Caco-2 (cell line): ENCODE measurements at regions of chr4 and their contacts with region 1.

Region 1: GRCh38 chr4:30714408-30715027 is 5.7 kb upstream of the PCDH7 start:
- DNase-seq: peak; percentile 67 to 73
- H3K4me3 ChIP-seq: no peak overlapping the region
- H3K4me3 Mint-ChIP-seq: no peak overlapping the region
- H3K27ac Mint-ChIP-seq: no peak overlapping the region
- H3K4me1 ChIP-seq: peaks cover 6% of the 10 kb centered on the region; the same call in 1 of the 2 replicates
- H3K4me1 Mint-ChIP-seq: no peaks in the 10 kb centered on the region
- H3K27me3 ChIP-seq: no peaks in the 10 kb centered on the region
- H3K27me3 Mint-ChIP-seq: no peaks in the 10 kb centered on the region
- CTCF ChIP-seq: peak; percentile 77 to 80

Region 2: GRCh38 chr4:30525662-30526315 is 188.7 kb before region 1 on chr4:
- CTCF ChIA-PET with region 1: no interaction called
- POLR2A ChIA-PET with region 1: no interaction called
- intact Hi-C with region 1: no loop called
- DNase-seq: no peak
- H3K4me3 ChIP-seq: no peak overlapping the region
- H3K4me3 Mint-ChIP-seq: no peak overlapping the region
- H3K27ac Mint-ChIP-seq: no peak overlapping the region
- H3K4me1 ChIP-seq: no peaks in the 10 kb centered on the region
- H3K4me1 Mint-ChIP-seq: peaks cover 12% of the 10 kb centered on the region
- H3K27me3 ChIP-seq: no peaks in the 10 kb centered on the region
- H3K27me3 Mint-ChIP-seq: no peaks in the 10 kb centered on the region
- CTCF ChIP-seq: no peak

Region 3: GRCh38 chr4:30757357-30757756 is 42.8 kb after region 1 on chr4:
- CTCF ChIA-PET with region 1: no interaction called
- POLR2A ChIA-PET with region 1: no interaction called
- intact Hi-C with region 1: loop called (anchors 2 kb)
- DNase-seq: peak; percentile 73 to 81
- H3K4me3 ChIP-seq: no peak overlapping the region
- H3K4me3 Mint-ChIP-seq: no peak overlapping the region
- H3K27ac Mint-ChIP-seq: no peak overlapping the region
- H3K4me1 ChIP-seq: peaks cover 62% of the 10 kb centered on the region
- H3K4me1 Mint-ChIP-seq: peaks cover 7% of the 10 kb centered on the region
- H3K27me3 ChIP-seq: no peaks in the 10 kb centered on the region
- H3K27me3 Mint-ChIP-seq: no peaks in the 10 kb centered on the region
- CTCF ChIP-seq: no peak

Region 4: GRCh38 chr4:30912098-30912714 is 197.7 kb after region 1 on chr4:
- CTCF ChIA-PET with region 1: interaction called, 4 read pairs
- POLR2A ChIA-PET with region 1: no interaction called
- intact Hi-C with region 1: loop called (anchors 2 kb)
- DNase-seq: peak in 1 of 2 experiments; percentile 5
- H3K4me3 ChIP-seq: no peak overlapping the region
- H3K4me3 Mint-ChIP-seq: peak overlapping the region; percentile 50
- H3K27ac Mint-ChIP-seq: peak overlapping the region; percentile 39
- H3K4me1 ChIP-seq: peaks cover 27% of the 10 kb centered on the region
- H3K4me1 Mint-ChIP-seq: peaks cover 27% of the 10 kb centered on the region
- H3K27me3 ChIP-seq: no peaks in the 10 kb centered on the region
- H3K27me3 Mint-ChIP-seq: no peaks in the 10 kb centered on the region
- CTCF ChIP-seq: no peak

Region 5: GRCh38 chr4:31246856-31247255 is 532.3 kb after region 1 on chr4:
- CTCF ChIA-PET with region 1: no interaction called
- POLR2A ChIA-PET with region 1: no interaction called
- intact Hi-C with region 1: loop called (anchors 10 kb)
- DNase-seq: no peak
- H3K4me3 ChIP-seq: no peak overlapping the region
- H3K4me3 Mint-ChIP-seq: no peak overlapping the region
- H3K27ac Mint-ChIP-seq: no peak overlapping the region
- H3K4me1 ChIP-seq: no peaks in the 10 kb centered on the region
- H3K4me1 Mint-ChIP-seq: no peaks in the 10 kb centered on the region
- H3K27me3 ChIP-seq: no peaks in the 10 kb centered on the region
- H3K27me3 Mint-ChIP-seq: no peaks in the 10 kb centered on the region
- CTCF ChIP-seq: no peak

Region 6: DNA sequence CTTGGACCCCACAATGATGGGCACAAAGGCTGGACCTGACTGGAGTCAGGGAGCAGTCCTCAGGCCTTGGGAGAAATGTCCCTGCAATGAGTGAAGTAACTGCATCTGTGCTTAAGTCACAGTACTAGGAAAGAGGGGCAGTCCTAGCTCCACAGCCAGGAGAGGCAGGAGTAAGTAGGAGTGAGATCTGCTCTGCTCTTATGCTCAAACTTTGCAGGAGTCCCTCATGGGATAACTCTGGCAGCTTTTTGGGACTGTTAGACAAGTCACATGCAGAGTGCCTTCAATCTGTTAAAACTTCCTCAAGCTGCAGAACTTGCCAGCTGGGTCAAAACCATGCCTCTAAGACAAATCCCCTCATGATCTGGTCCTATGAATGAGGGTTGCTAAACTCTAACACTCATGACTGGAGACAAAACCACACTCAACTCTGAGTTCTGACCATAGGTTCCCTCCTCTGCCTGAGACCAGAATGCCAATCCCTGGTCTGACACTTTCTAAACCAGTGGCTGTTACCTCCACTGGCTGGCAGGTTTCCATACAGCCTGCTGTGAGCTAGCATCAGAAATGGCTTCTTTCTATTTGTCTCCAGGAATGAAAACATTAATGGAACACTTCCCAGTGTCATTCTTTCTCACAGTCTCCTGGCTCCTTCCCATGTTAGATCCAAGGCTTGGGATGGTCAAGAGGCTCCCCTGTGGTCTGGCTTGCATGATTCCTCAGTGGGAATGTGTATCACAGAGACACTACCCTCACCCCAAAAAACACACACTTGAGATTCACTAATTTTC is 825.0 kb after region 1 on chr4:
- CTCF ChIA-PET with region 1: no interaction called
- POLR2A ChIA-PET with region 1: no interaction called
- intact Hi-C with region 1: loop called (anchors 10 kb)
- DNase-seq: no peak
- H3K4me3 ChIP-seq: no peak overlapping the region
- H3K4me3 Mint-ChIP-seq: no peak overlapping the region
- H3K27ac Mint-ChIP-seq: no peak overlapping the region
- H3K4me1 ChIP-seq: no peaks in the 10 kb centered on the region
- H3K4me1 Mint-ChIP-seq: no peaks in the 10 kb centered on the region
- H3K27me3 ChIP-seq: no peaks in the 10 kb centered on the region
- H3K27me3 Mint-ChIP-seq: no peaks in the 10 kb centered on the region
- CTCF ChIP-seq: no peak